Activated naive CD4-positive, alpha-beta T cell treated with anti-CD3 and anti-CD28 coated beads for 36 hours (primary cell): ENCODE measurements at regions of chr3 and their contacts with region 1.

Region 1: GRCh38 chr3:25817107-25817506 is 27.2 kb downstream of the OXSM start:
- DNase-seq: no peak
- H3K4me3 Mint-ChIP-seq: no peak overlapping the region
- H3K27ac Mint-ChIP-seq: no peak overlapping the region
- H3K4me1 Mint-ChIP-seq: peaks cover 4% of the 10 kb centered on the region
- H3K27me3 Mint-ChIP-seq: no peaks in the 10 kb centered on the region

Region 2: GRCh38 chr3:25789596-25790556 is 27.2 kb before region 1 on chr3 and contains the start of gene OXSM:
- CTCF ChIA-PET with region 1: no interaction called
- intact Hi-C with region 1: loop called (anchors 2 kb)
- DNase-seq: peak; percentile 93
- H3K4me3 Mint-ChIP-seq: peak within 1 kb of the TSS; percentile 97
- H3K27ac Mint-ChIP-seq: peak within 1 kb of the TSS; percentile 97
- H3K4me1 Mint-ChIP-seq: peaks cover 42% of the 10 kb centered on the region
- H3K27me3 Mint-ChIP-seq: no peaks in the 10 kb centered on the region
- total RNA-seq, gene OXSM: 10.0 to 11.4 TPM

Region 3: GRCh38 chr3:25897019-25897418 is 79.9 kb after region 1 on chr3:
- CTCF ChIA-PET with region 1: no interaction called
- intact Hi-C with region 1: no loop called
- DNase-seq: peak; percentile 15
- H3K4me3 Mint-ChIP-seq: no peak overlapping the region
- H3K27ac Mint-ChIP-seq: no peak overlapping the region
- H3K4me1 Mint-ChIP-seq: peaks cover 5% of the 10 kb centered on the region
- H3K27me3 Mint-ChIP-seq: no peaks in the 10 kb centered on the region